Mammary epithelial cell (primary cell): ENCODE measurements at regions of chr6 and their contacts with region 1.

Region 1: GRCh38 chr6:142692942-142693341 is 252.0 kb downstream of the HIVEP2 start:
- DNase-seq: peak; percentile 57
- H3K4me3 ChIP-seq: no peak overlapping the region
- H3K27ac ChIP-seq: no peak overlapping the region
- H3K4me1 ChIP-seq: peaks cover 22% of the 10 kb centered on the region
- H3K27me3 ChIP-seq: no peaks in the 10 kb centered on the region
- CTCF ChIP-seq: peak; percentile 91 to 92

Region 2: GRCh38 chr6:142474531-142475289 is 218.2 kb before region 1 on chr6:
- CTCF ChIA-PET with region 1: no interaction called
- dilution Hi-C with region 1: no loop called
- in situ Hi-C with region 1: no loop called
- intact Hi-C with region 1: loop called (anchors 2 kb)
- DNase-seq: peak; percentile 68
- H3K4me3 ChIP-seq: peak overlapping the region in 1 of 3 experiments; percentile 32
- H3K27ac ChIP-seq: no peak overlapping the region
- H3K4me1 ChIP-seq: peaks cover 3% of the 10 kb centered on the region
- H3K27me3 ChIP-seq: no peaks in the 10 kb centered on the region
- CTCF ChIP-seq: peak; percentile 63 to 65

Region 3: GRCh38 chr6:142819603-142820337 is 126.8 kb after region 1 on chr6:
- CTCF ChIA-PET with region 1: no interaction called
- dilution Hi-C with region 1: no loop called
- in situ Hi-C with region 1: no loop called
- intact Hi-C with region 1: loop called (anchors 5 kb)
- DNase-seq: peak; percentile 73
- H3K4me3 ChIP-seq: peak overlapping the region; percentile 35 to 48 (median 40)
- H3K27ac ChIP-seq: peak overlapping the region; percentile 71
- H3K4me1 ChIP-seq: peaks cover 4% of the 10 kb centered on the region
- H3K27me3 ChIP-seq: no peaks in the 10 kb centered on the region
- CTCF ChIP-seq: no peak

Region 4: GRCh38 chr6:143026696-143027449 is 333.9 kb after region 1 on chr6:
- CTCF ChIA-PET with region 1: no interaction called
- dilution Hi-C with region 1: no loop called
- in situ Hi-C with region 1: no loop called
- intact Hi-C with region 1: loop called (anchors 1 kb)
- DNase-seq: no peak
- H3K4me3 ChIP-seq: no peak overlapping the region
- H3K27ac ChIP-seq: no peak overlapping the region
- H3K4me1 ChIP-seq: no peaks in the 10 kb centered on the region
- H3K27me3 ChIP-seq: no peaks in the 10 kb centered on the region
- CTCF ChIP-seq: peak; percentile 46 to 55

Region 5: GRCh38 chr6:143279385-143279784 is 586.4 kb after region 1 on chr6:
- CTCF ChIA-PET with region 1: no interaction called
- dilution Hi-C with region 1: no loop called
- in situ Hi-C with region 1: no loop called
- intact Hi-C with region 1: loop called (anchors 1 kb)
- DNase-seq: peak; percentile 16
- H3K4me3 ChIP-seq: no peak overlapping the region
- H3K27ac ChIP-seq: no peak overlapping the region
- H3K4me1 ChIP-seq: peaks cover 4% of the 10 kb centered on the region
- H3K27me3 ChIP-seq: no peaks in the 10 kb centered on the region
- CTCF ChIP-seq: peak; percentile 13 to 25

Region 6: DNA sequence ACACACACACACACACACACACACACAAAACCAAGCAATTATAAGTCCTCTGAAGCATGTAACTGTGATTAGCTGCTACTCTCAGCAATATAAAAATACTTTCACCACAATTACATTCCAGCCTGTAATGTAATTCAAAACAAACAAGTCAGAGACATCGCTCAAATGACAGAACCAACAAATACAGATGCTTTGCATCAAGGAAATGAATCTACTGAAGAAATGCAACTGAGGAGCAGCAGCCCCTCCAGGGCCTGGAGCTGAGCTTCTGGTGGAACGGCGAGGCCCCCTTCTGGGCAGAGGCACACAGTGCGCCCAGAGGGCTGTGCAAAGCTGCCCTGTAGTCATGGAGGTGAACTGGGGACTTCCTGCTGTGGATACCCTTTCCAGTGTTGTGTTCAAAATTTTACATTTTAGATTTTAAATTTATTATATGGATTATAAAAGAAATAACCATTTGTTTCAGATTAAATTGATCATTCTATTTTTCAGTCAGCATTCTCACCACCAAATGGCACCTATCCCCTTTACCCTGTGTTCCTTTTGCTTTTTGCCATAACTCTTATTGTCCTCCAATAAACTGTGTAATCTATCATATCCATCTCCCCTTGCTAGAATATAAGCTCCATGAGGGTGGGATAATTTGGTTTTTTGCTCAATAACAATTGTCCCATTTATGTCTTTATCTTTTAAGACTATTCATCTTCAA is 734.3 kb after region 1 on chr6:
- CTCF ChIA-PET with region 1: interaction called, 10 read pairs
- dilution Hi-C with region 1: loop called (anchors 5 kb)
- in situ Hi-C with region 1: loop called (anchors 25 kb)
- intact Hi-C with region 1: loop called (anchors 1 kb)
- DNase-seq: peak; percentile 70
- H3K4me3 ChIP-seq: no peak overlapping the region
- H3K27ac ChIP-seq: no peak overlapping the region
- H3K4me1 ChIP-seq: peaks cover 12% of the 10 kb centered on the region
- H3K27me3 ChIP-seq: no peaks in the 10 kb centered on the region
- CTCF ChIP-seq: peak; percentile 98 to 100

Region 7: GRCh38 chr6:144008120-144008811 is 1315.3 kb after region 1 on chr6 and contains the start of gene PLAGL1:
- CTCF ChIA-PET with region 1: no interaction called
- dilution Hi-C with region 1: no loop called
- in situ Hi-C with region 1: no loop called
- intact Hi-C with region 1: loop called (anchors 10 kb)
- DNase-seq: peak; percentile 57
- H3K4me3 ChIP-seq: peak within 1 kb of the TSS; percentile 55 to 66 (median 62)
- H3K27ac ChIP-seq: peak within 1 kb of the TSS; percentile 77
- H3K4me1 ChIP-seq: peaks cover 4% of the 10 kb centered on the region
- H3K27me3 ChIP-seq: no peaks in the 10 kb centered on the region
- CTCF ChIP-seq: no peak
- total RNA-seq, gene PLAGL1: 10.8 to 30.7 TPM